ENCODE measurements at regions of chr12 and their contacts with region 1.

Region 1: GRCh38 chr12:130572553-130572952 is 143.5 kb downstream of the RIMBP2 start:
- DNase-seq: peak; percentile 88
- H3K4me3 ChIP-seq: no peak overlapping the region
- H3K27ac ChIP-seq: peak overlapping the region in 1 of 2 experiments; percentile 94; a peak in 2 of 4 replicates
- H3K4me1 ChIP-seq: peaks cover 0 to 78% of the 10 kb centered on the region in 2 experiments; a peak in 2 of 4 replicates
- H3K27me3 ChIP-seq: no peaks in the 10 kb centered on the region
- CTCF ChIP-seq: no peak
- EP300 ChIP-seq: peak in 1 of 2 experiments; percentile 85; a peak in 2 of 4 replicates
- RAD21 ChIP-seq: peak; percentile 42

Region 2: GRCh38 chr12:129807136-129807535 is 765.4 kb before region 1 on chr12:
- CTCF ChIA-PET with region 1: no interaction called
- POLR2A ChIA-PET with region 1: no interaction called
- DNase-seq: no peak
- H3K4me3 ChIP-seq: no peak overlapping the region
- H3K27ac ChIP-seq: no peak overlapping the region
- H3K4me1 ChIP-seq: no peaks in the 10 kb centered on the region
- H3K27me3 ChIP-seq: no peaks in the 10 kb centered on the region
- CTCF ChIP-seq: no peak
- EP300 ChIP-seq: no peak
- RAD21 ChIP-seq: no peak

Region 3: DNA sequence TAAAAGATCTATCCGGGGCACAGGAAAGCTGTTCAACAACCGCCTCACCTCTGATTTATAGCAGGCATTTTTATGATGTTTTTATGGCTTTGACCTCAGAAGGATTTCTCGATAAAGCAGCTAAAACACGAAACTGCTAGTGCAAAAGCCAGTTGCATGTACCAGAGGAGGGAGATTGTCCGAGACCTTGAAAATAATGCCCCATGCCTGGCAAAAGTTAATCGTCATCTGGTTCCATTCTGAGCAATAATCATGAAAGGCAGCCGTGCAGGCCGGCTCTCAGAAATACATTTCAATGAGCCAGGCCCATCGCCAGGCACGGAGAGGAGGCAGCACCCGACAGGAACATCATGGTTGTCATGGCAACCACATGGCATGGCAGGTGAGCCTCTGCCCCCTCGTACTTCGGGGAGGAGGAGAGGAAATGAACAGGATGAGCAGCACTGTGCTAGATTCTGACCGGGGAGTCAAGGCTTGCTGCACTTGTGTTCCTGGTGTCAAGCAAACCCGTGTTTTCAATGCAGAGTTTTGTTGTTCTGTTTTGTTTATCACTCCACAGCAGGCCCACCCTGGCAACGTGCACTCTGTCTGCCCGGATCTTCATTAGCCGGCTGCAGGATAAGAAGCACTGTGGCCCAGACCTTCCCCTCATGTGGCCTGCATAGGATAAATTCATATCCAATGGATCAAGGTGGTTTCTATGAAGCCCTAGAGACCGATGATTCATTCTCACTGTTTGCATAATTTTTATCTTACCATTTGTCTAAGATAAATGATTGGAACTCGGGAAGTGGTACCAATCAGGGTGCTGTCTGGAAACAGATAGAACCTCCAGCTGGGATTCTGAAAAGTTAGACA is 16.7 kb before region 1 on chr12:
- CTCF ChIA-PET with region 1: interaction called, 4 read pairs
- POLR2A ChIA-PET with region 1: interaction called, 12 read pairs
- DNase-seq: peak; percentile 81
- H3K4me3 ChIP-seq: no peak overlapping the region
- H3K27ac ChIP-seq: peak overlapping the region in 1 of 2 experiments; percentile 98; a peak in 3 of 4 replicates
- H3K4me1 ChIP-seq: peaks cover 0 to 57% of the 10 kb centered on the region in 2 experiments; a peak in 2 of 4 replicates
- H3K27me3 ChIP-seq: no peaks in the 10 kb centered on the region
- CTCF ChIP-seq: no peak
- EP300 ChIP-seq: peak in 1 of 2 experiments; percentile 80; a peak in 2 of 4 replicates
- RAD21 ChIP-seq: no peak; the same call in none of the 2 replicates

Region 4: DNA sequence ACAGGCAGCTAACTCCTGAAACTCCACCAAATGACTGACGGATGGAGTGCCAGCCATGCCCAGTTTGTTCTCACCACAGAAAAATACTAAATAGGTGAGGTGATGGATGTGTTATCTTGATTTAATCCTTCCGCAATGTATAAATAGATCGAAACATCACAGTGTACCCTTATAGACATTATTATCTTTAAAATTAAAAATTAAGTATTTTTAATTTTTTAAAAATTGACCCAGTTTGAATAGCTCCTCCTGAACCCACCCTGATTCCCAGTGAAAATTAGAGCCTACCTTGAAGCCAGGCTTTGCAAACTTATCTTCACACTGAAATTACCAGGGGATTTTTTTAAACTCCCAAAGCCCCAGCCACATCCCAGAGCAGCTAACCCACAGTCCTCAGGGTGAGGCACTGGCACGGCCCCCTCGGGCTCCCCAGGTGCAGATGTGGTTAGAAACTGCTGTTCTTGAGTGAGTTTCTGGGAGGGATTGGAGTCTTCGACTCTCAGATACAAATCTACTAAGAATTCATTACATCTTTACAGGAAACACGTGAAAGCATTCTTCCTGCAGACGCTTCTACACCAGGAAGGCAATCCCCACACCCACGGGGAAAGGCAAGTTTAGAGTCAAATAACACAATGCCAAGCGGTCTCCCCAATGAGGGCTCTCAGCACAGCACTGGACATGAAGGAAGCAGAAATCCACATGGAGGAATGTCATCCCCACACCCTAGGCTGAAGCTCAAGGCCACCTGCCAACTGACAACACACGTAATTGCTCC is 17.2 kb after region 1 on chr12:
- CTCF ChIA-PET with region 1: interaction called, 4 read pairs
- POLR2A ChIA-PET with region 1: interaction called, 10 read pairs
- DNase-seq: no peak
- H3K4me3 ChIP-seq: no peak overlapping the region
- H3K27ac ChIP-seq: peak overlapping the region in 1 of 2 experiments; percentile 95; a peak in 2 of 4 replicates
- H3K4me1 ChIP-seq: peaks cover 0 to 53% of the 10 kb centered on the region in 2 experiments; a peak in 2 of 4 replicates
- H3K27me3 ChIP-seq: no peaks in the 10 kb centered on the region
- CTCF ChIP-seq: no peak
- EP300 ChIP-seq: no peak
- RAD21 ChIP-seq: no peak

Measured in SK-N-SH (cell line).